ENCODE measurements at regions of chr19 and their contacts with region 1.

Region 1: GRCh38 chr19:35352448-35353304 is 5.0 kb downstream of the FFAR1 start:
- DNase-seq: peak; percentile 45
- H3K4me3 ChIP-seq: no peak overlapping the region
- H3K27ac ChIP-seq: no peak overlapping the region
- H3K4me1 ChIP-seq: peaks cover 7% of the 10 kb centered on the region
- H3K27me3 ChIP-seq: peaks cover 70% of the 10 kb centered on the region
- CTCF ChIP-seq: peak; percentile 82

Region 2: DNA sequence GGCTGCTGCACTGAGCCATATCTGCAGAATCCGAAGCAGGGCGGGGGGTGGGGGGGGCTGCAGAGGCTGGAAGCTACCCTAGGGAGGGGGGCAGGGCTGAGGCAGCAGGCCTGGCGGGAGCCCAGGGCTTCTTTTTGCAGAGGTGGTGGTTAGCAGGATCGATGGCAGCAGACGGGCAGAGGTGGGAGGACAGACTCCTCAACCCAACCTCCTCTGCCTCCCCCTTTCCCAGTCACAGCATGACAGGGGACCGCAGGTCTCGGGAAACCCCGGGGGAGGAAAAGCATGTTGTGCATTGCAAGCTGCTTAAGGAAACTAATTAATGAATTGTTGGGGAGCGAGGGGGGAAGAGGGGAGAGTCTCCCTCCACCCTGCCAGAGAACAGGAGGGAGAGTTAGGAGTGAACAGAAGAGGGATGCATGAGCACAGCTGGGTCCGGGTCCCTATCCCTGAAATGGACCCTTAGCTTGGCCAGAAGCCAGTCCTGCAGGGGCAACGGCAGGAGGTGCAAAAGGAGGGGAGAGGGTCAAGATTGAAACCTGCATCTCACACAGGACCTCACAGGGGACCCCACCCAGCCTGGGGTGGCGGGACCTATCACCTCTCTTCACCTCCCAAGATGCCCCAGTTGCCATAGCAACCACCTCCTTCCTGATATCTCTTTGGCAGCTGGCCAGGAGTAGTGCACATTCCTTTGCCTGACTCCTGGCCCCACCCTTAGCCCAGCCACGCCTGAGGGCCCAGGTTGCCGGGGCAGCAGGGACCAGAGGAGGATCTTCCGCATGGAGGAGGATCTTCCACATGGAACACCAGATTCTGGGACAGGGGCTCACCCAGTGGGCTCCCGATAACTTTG is 207.8 kb before region 1 on chr19:
- intact Hi-C with region 1: no loop called
- DNase-seq: no peak
- H3K4me3 ChIP-seq: no peak overlapping the region
- H3K27ac ChIP-seq: no peak overlapping the region
- H3K4me1 ChIP-seq: peaks cover 43% of the 10 kb centered on the region
- H3K27me3 ChIP-seq: peaks cover 14% of the 10 kb centered on the region
- CTCF ChIP-seq: no peak

Region 3: GRCh38 chr19:35468637-35469036 is 116.0 kb after region 1 on chr19:
- intact Hi-C with region 1: loop called (anchors 10 kb)
- DNase-seq: peak; percentile 39
- H3K4me3 ChIP-seq: no peak overlapping the region
- H3K27ac ChIP-seq: no peak overlapping the region
- H3K4me1 ChIP-seq: no peaks in the 10 kb centered on the region
- H3K27me3 ChIP-seq: no peaks in the 10 kb centered on the region
- CTCF ChIP-seq: peak; percentile 78

Region 4: GRCh38 chr19:35495107-35496064 is 142.7 kb after region 1 on chr19:
- intact Hi-C with region 1: loop called (anchors 10 kb)
- DNase-seq: peak; percentile 63
- H3K4me3 ChIP-seq: peak overlapping the region; percentile 34
- H3K27ac ChIP-seq: no peak overlapping the region
- H3K4me1 ChIP-seq: peaks cover 8% of the 10 kb centered on the region
- H3K27me3 ChIP-seq: peaks cover 6% of the 10 kb centered on the region
- CTCF ChIP-seq: peak; percentile 99

Measured in left ventricle myocardium inferior (tissue), 1 donor.